ENCODE measurements at regions of chr17 and their contacts with region 1.

Region 1: DNA sequence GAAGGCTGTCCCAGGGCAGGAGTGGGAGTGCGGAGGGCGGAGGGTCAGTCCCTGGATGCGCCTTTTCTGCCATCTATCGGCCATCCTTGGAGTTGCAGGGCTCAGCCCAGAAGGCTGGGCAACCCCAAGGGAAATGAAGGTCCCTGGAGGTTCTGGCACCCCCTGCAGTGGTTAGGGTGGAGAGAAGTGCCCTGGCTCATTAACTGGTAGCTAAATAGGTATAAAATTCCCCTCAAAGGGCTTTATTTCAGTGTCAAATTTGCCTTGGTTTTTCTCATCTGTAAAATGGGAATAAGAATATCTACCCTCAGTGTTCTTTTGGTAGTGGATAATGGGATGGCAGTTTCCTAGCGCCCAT is 22.4 kb downstream of the C17orf75 start:
- DNase-seq: peak; percentile 59
- ATAC-seq: peak; percentile 70
- H3K4me3 ChIP-seq: no peak overlapping the region
- H3K27ac ChIP-seq: no peak overlapping the region
- H3K4me1 ChIP-seq: peaks cover 73% of the 10 kb centered on the region
- H3K27me3 ChIP-seq: peaks cover 3 to 9% of the 10 kb centered on the region in 2 experiments; a peak in 4 of 5 replicates
- CTCF ChIP-seq: peak; percentile 94
- EP300 ChIP-seq: peak in 1 of 2 experiments; percentile 27; a peak in 1 of 4 replicates
- POLR2A ChIP-seq: no peak
- RAD21 ChIP-seq: peak; percentile 94

Region 2: DNA sequence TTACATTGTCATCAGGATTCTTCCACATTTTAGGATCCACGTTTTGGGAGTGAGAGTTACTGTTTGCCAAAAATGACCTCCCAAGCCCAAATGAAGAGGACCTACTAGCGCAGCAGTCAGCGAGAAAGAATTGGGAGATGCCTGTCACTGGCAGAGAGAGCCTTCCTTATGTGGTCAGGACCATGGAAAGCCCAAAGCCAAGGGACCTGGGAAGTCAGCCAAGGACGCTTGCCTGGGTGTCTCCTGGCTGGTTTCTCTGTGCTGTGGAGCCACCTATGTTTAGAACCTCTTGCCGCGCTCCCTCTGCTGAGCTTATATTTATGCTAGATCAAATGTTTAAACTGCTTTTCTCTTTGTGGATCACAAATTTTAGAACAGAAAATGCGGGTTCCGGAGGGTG is 78.8 kb before region 1 on chr17:
- CTCF ChIA-PET with region 1: no interaction called
- POLR2A ChIA-PET with region 1: no interaction called
- in situ Hi-C with region 1: no loop called
- intact Hi-C with region 1: no loop called
- DNase-seq: no peak
- ATAC-seq: no peak
- H3K4me3 ChIP-seq: no peak overlapping the region
- H3K27ac ChIP-seq: no peak overlapping the region
- H3K4me1 ChIP-seq: no peaks in the 10 kb centered on the region
- H3K27me3 ChIP-seq: no peaks in the 10 kb centered on the region
- CTCF ChIP-seq: no peak
- EP300 ChIP-seq: no peak
- POLR2A ChIP-seq: no peak
- RAD21 ChIP-seq: no peak

Region 3: DNA sequence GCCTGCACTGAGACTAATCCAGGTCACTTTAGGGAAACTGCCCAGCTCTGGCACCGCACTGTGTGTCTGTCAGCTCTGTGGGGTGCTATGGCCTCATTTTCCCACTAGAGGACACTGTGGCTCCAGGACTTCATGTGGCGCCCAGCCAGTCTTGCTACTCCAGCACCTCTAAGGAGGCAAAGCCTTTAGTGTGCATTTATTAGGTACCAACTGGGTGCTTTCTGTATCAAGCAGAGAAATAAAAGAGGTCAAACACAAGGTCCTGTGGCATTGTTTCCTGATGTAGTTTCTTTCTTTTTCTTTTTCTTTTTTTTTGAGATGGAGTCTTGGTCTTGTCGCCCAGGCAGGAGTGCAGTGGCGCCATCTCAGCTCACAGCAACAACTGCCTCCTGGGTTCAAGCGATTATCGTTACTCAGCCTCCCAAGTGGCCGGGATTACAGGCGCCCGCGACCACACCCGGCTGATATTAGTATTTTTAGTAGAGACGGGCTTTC is 66.4 kb before region 1 on chr17:
- CTCF ChIA-PET with region 1: interaction called, 37 read pairs
- POLR2A ChIA-PET with region 1: no interaction called
- in situ Hi-C with region 1: loop called (anchors 5 kb)
- intact Hi-C with region 1: loop called (anchors 1 kb)
- DNase-seq: peak; percentile 70
- ATAC-seq: peak; percentile 96
- H3K4me3 ChIP-seq: no peak overlapping the region
- H3K27ac ChIP-seq: no peak overlapping the region
- H3K4me1 ChIP-seq: peaks cover 23% of the 10 kb centered on the region
- H3K27me3 ChIP-seq: peaks cover 0 to 2% of the 10 kb centered on the region in 2 experiments; a peak in 1 of 5 replicates
- CTCF ChIP-seq: peak; percentile 97
- EP300 ChIP-seq: no peak
- POLR2A ChIP-seq: no peak
- RAD21 ChIP-seq: peak; percentile 96

Region 4: GRCh38 chr17:32259586-32259985 is 59.9 kb before region 1 on chr17:
- CTCF ChIA-PET with region 1: no interaction called
- POLR2A ChIA-PET with region 1: no interaction called
- in situ Hi-C with region 1: loop called (anchors 5 kb)
- intact Hi-C with region 1: no loop called
- DNase-seq: no peak
- ATAC-seq: no peak
- H3K4me3 ChIP-seq: no peak overlapping the region
- H3K27ac ChIP-seq: no peak overlapping the region
- H3K4me1 ChIP-seq: peaks cover 17% of the 10 kb centered on the region
- H3K27me3 ChIP-seq: peaks cover 6 to 45% of the 10 kb centered on the region in 2 experiments
- CTCF ChIP-seq: no peak
- EP300 ChIP-seq: no peak
- POLR2A ChIP-seq: no peak
- RAD21 ChIP-seq: no peak

Region 5: DNA sequence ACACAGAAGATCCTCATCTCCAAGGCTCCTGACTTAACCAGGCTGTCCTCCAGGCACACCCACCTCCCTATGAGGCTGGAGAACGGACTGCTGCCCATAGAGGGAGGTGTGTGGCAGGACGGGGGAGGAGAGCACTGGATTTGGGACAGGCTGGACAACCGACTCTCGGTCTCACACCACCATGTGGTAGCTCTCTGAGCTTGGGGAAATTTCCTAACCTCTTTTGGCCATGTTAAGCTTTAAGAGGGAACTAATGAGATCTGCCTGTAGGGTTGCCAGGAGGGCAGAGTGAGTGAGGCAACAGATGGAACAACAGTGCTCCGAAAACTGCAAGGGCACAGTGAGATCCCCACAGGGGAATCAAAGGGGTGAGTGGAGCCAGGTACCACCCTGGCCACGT is 21.2 kb before region 1 on chr17:
- CTCF ChIA-PET with region 1: no interaction called
- POLR2A ChIA-PET with region 1: no interaction called
- in situ Hi-C with region 1: no loop called
- intact Hi-C with region 1: no loop called
- DNase-seq: no peak
- ATAC-seq: peak; percentile 41
- H3K4me3 ChIP-seq: 0 out of 6 replicates have a peak overlapping the region, but pooled peaks of 1 of the 3 experiments have one; percentile 43
- H3K27ac ChIP-seq: no peak overlapping the region
- H3K4me1 ChIP-seq: peaks cover 41% of the 10 kb centered on the region
- H3K27me3 ChIP-seq: peaks cover 0 to 1% of the 10 kb centered on the region in 2 experiments; a peak in 2 of 5 replicates
- CTCF ChIP-seq: no peak
- EP300 ChIP-seq: no peak
- POLR2A ChIP-seq: no peak
- RAD21 ChIP-seq: no peak

Region 6: GRCh38 chr17:32341857-32342602 is 22.5 kb after region 1 on chr17 and contains the start of gene C17orf75:
- CTCF ChIA-PET with region 1: no interaction called
- POLR2A ChIA-PET with region 1: interaction called, 10 read pairs
- in situ Hi-C with region 1: no loop called
- intact Hi-C with region 1: no loop called
- DNase-seq: peak; percentile 73
- ATAC-seq: peak; percentile 95
- H3K4me3 ChIP-seq: peak within 1 kb of the TSS; percentile 78 to 84 (median 81)
- H3K27ac ChIP-seq: peak within 1 kb of the TSS; percentile 88
- H3K4me1 ChIP-seq: peaks cover 21% of the 10 kb centered on the region
- H3K27me3 ChIP-seq: no peaks in the 10 kb centered on the region
- CTCF ChIP-seq: peak; percentile 34; the same call in 1 of the 2 replicates
- EP300 ChIP-seq: peak in 1 of 2 experiments; percentile 48; a peak in 1 of 4 replicates
- POLR2A ChIP-seq: peak; percentile 63 to 80
- RAD21 ChIP-seq: peak; percentile 57; the same call in 1 of the 2 replicates
- total RNA-seq, gene C17orf75: 33.0 and 41.9 TPM in 2 replicates

Region 7: DNA sequence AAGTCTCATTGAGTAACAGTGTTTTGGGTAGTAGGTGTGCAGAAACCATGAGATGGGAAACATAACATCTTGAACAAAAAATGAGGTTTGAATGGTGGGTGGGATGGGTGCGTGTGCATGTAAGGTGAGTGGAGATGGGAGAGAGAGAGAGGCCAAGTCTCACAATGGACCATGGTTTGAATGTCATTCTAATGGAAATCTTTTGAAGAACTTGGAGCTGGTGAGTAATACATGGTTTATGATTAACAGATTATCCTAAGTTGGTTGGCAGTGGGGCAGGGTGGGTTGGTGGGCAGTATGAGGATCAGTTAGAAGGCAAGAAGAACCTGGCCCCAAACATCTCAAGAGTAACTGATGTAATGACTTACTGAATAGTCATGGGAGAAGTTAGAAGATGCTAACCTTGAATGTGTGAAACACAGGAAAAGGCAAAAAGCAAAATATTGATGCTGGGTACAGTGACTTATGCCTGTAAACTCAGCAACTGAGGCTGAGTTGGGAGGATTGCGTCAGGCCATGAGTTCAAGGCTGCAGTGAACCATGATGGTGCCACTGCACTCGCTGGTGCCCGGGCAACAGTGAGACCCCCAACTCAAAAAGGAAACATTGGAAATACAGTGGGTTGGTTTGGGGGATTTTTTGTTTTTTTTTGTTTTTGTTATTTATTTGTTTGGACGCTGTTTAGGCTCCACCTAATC is 63.1 kb after region 1 on chr17:
- CTCF ChIA-PET with region 1: no interaction called
- POLR2A ChIA-PET with region 1: no interaction called
- in situ Hi-C with region 1: no loop called
- intact Hi-C with region 1: no loop called
- DNase-seq: peak; percentile 18
- ATAC-seq: peak; percentile 37
- H3K4me3 ChIP-seq: no peak overlapping the region
- H3K27ac ChIP-seq: no peak overlapping the region
- H3K4me1 ChIP-seq: peaks cover 63% of the 10 kb centered on the region
- H3K27me3 ChIP-seq: no peaks in the 10 kb centered on the region
- CTCF ChIP-seq: no peak
- EP300 ChIP-seq: no peak
- POLR2A ChIP-seq: 0 out of 4 replicates have a peak, but pooled peaks of 1 of the 2 experiments have one; percentile 12
- RAD21 ChIP-seq: no peak

Measured in HepG2 (cell line).